ENCODE measurements at regions of chr9 and their contacts with region 1.

Region 1: DNA sequence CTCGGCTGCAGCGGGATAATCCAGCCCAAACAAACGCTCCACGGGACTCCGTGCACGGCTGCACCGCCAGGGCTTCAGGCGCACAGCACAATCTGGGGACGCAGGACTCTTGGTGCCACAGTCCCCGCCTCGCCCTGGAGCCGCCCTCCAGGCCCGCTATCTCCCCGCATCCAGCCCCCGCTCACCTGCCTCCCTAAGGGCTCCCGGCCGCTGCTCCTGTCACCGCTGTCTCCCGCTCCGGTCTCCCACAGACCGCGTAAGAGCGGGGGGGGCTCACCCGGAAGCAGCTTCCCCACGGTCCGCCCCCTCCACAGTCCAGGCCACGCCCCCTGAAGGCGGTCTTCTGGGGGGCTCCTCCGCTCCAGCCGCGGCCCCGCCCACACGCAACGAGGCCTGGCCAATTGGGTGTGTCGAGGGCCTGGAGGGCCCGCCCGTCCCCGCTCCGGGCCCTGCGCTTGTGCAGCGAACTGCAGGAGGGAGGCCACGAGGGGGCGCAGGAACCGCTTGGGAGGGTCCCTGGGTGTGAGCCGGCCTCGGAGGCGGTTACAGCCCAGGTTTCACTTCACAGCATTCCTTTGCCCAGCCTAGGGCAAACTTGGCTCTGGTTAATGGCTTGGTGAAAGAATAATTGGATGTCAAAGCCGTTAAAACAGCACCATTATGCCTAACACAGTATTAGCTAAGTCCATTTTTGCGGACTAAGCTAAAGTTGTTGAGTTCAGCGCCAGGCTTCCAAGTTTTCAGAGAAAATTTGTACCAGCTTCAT is at the start of gene ALAD:
- DNase-seq: peak; percentile 99
- H3K4me3 ChIP-seq: peak within 1 kb of the TSS; percentile 54 to 91 (median 72)
- H3K27ac ChIP-seq: peak within 1 kb of the TSS; percentile 71 to 81 (median 76)
- H3K4me1 ChIP-seq: peaks cover 0 to 21% (median 15%) of the 10 kb centered on the region in 4 donors
- H3K27me3 ChIP-seq: no peaks in the 10 kb centered on the region
- CTCF ChIP-seq: peak; percentile 84 to 94 (median 90)
- EP300 ChIP-seq: peak in 1 of 4 donors; percentile 4
- POLR2A ChIP-seq: peak; percentile 20 to 39
- total RNA-seq, gene ALAD: 14.8 to 31.0 (median 23.3) TPM

Region 2: DNA sequence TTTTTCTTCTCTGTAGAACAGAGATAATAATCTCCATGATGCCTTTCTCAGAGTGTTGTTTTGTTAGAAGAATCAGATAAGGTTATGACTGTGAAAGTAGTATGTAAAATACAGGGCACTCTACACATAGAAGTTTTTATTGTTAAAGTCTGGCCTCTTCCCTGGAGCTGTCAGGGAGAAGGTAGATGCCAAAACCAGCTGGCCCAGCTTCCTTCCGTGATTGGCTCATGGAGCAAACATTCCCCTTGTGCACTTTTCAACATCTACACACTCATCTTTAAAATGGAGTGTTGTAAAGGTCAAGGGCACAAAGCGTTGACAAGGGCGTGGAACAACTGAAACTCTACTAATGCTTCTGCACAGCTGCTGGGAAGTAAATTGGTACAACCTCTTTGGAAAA is 90.7 kb before region 1 on chr9:
- intact Hi-C with region 1: loop called (anchors 2 kb)
- DNase-seq: no peak
- H3K4me3 ChIP-seq: no peak overlapping the region
- H3K27ac ChIP-seq: peak overlapping the region in 1 of 4 donors; percentile 10
- H3K4me1 ChIP-seq: peaks cover 0 to 6% (median 2%) of the 10 kb centered on the region in 4 donors
- H3K27me3 ChIP-seq: no peaks in the 10 kb centered on the region
- CTCF ChIP-seq: no peak
- EP300 ChIP-seq: no peak
- POLR2A ChIP-seq: no peak

Region 3: GRCh38 chr9:113340017-113340699 is 61.1 kb before region 1 on chr9 and contains the start of gene WDR31:
- intact Hi-C with region 1: loop called (anchors 2 kb)
- DNase-seq: peak; percentile 93
- H3K4me3 ChIP-seq: peak within 1 kb of the TSS; percentile 66 to 84 (median 70)
- H3K27ac ChIP-seq: peak within 1 kb of the TSS; percentile 80 to 88 (median 88)
- H3K4me1 ChIP-seq: peaks cover 0 to 38% (median 28%) of the 10 kb centered on the region in 4 donors
- H3K27me3 ChIP-seq: no peaks in the 10 kb centered on the region
- CTCF ChIP-seq: no peak
- EP300 ChIP-seq: no peak
- POLR2A ChIP-seq: peak in 1 of 2 donors; percentile 45
- total RNA-seq, gene WDR31: 1.8 to 3.9 (median 2.6) TPM

Region 4: GRCh38 chr9:113349445-113350094 is 51.6 kb before region 1 on chr9 and contains the start of gene BSPRY:
- intact Hi-C with region 1: loop called (anchors 2 kb)
- DNase-seq: no peak
- H3K4me3 ChIP-seq: peak within 1 kb of the TSS; percentile 31 to 59 (median 57)
- H3K27ac ChIP-seq: peak within 1 kb of the TSS in 3 of 4 donors; percentile 15 to 56 (median 38)
- H3K4me1 ChIP-seq: peaks cover 0 to 21% (median 18%) of the 10 kb centered on the region in 4 donors
- H3K27me3 ChIP-seq: peaks cover 0 to 25% (median 2%) of the 10 kb centered on the region in 3 donors
- CTCF ChIP-seq: no peak
- EP300 ChIP-seq: no peak
- POLR2A ChIP-seq: no peak
- total RNA-seq, gene BSPRY: 0.27 to 0.66 (median 0.32) TPM

Region 5: GRCh38 chr9:113376634-113377567 is 24.3 kb before region 1 on chr9 and contains the start of gene HDHD3:
- intact Hi-C with region 1: loop called (anchors 1 kb)
- DNase-seq: peak; percentile 93
- H3K4me3 ChIP-seq: peak within 1 kb of the TSS; percentile 75 to 89 (median 88)
- H3K27ac ChIP-seq: peak within 1 kb of the TSS; percentile 82 to 86 (median 84)
- H3K4me1 ChIP-seq: peaks cover 0 to 21% (median 12%) of the 10 kb centered on the region in 4 donors
- H3K27me3 ChIP-seq: no peaks in the 10 kb centered on the region
- CTCF ChIP-seq: no peak
- EP300 ChIP-seq: no peak
- POLR2A ChIP-seq: peak; percentile 74 to 87
- total RNA-seq, gene HDHD3: 16.4 to 34.6 (median 25.6) TPM

Region 6: DNA sequence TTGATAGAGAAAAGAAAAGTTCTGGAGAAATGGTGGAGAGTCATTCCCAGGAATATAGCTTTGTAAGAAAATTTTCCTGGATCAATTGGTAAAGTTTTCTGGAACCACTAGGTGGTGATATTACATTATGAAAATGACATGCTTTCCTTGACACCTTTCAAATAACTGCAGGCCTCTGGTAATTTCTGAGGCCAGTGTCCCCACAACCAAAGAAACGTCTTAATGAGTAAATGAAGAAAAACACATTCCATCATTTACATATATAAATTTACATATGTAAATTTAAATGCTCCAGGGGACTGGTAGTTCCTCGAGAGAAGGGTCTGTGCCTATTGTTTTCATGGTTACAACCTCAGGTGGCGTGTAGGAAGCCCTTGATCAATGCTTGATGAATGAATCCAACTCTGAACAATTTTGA is 45.1 kb after region 1 on chr9:
- intact Hi-C with region 1: no loop called
- DNase-seq: no peak
- H3K4me3 ChIP-seq: no peak overlapping the region
- H3K27ac ChIP-seq: peak overlapping the region in 1 of 4 donors; percentile 35
- H3K4me1 ChIP-seq: peaks cover 0 to 3% (median 0%) of the 10 kb centered on the region in 4 donors
- H3K27me3 ChIP-seq: no peaks in the 10 kb centered on the region
- CTCF ChIP-seq: peak; percentile 54 to 73 (median 56)
- EP300 ChIP-seq: no peak
- POLR2A ChIP-seq: no peak

Region 7: GRCh38 chr9:113657703-113658544 is 256.7 kb after region 1 on chr9:
- intact Hi-C with region 1: loop called (anchors 5 kb)
- DNase-seq: peak; percentile 91
- H3K4me3 ChIP-seq: no peak overlapping the region
- H3K27ac ChIP-seq: no peak overlapping the region
- H3K4me1 ChIP-seq: peaks cover 0 to 19% (median 12%) of the 10 kb centered on the region in 4 donors
- H3K27me3 ChIP-seq: peaks cover 0 to 7% (median 0%) of the 10 kb centered on the region in 3 donors
- CTCF ChIP-seq: peak; percentile 92 to 97 (median 95)
- EP300 ChIP-seq: no peak
- POLR2A ChIP-seq: no peak